Adrenal gland (tissue), 19 donors: ENCODE measurements at regions of chr11 and their contacts with region 1.

Region 1: GRCh38 chr11:130434521-130435223 is 6.3 kb upstream of the ADAMTS8 start:
- DNase-seq: peak; percentile 68 to 89 (median 78)
- H3K4me3 ChIP-seq: peak overlapping the region; percentile 48 to 71 (median 56)
- H3K27ac ChIP-seq: peak overlapping the region in 2 of 5 donors; percentile 37 to 43
- H3K4me1 ChIP-seq: peaks cover 0 to 5% of the 10 kb centered on the region in 2 donors
- H3K27me3 ChIP-seq: peaks cover 15% of the 10 kb centered on the region
- CTCF ChIP-seq: peak; percentile 71 to 89 (median 80)
- POLR2A ChIP-seq: no peak

Region 2: DNA sequence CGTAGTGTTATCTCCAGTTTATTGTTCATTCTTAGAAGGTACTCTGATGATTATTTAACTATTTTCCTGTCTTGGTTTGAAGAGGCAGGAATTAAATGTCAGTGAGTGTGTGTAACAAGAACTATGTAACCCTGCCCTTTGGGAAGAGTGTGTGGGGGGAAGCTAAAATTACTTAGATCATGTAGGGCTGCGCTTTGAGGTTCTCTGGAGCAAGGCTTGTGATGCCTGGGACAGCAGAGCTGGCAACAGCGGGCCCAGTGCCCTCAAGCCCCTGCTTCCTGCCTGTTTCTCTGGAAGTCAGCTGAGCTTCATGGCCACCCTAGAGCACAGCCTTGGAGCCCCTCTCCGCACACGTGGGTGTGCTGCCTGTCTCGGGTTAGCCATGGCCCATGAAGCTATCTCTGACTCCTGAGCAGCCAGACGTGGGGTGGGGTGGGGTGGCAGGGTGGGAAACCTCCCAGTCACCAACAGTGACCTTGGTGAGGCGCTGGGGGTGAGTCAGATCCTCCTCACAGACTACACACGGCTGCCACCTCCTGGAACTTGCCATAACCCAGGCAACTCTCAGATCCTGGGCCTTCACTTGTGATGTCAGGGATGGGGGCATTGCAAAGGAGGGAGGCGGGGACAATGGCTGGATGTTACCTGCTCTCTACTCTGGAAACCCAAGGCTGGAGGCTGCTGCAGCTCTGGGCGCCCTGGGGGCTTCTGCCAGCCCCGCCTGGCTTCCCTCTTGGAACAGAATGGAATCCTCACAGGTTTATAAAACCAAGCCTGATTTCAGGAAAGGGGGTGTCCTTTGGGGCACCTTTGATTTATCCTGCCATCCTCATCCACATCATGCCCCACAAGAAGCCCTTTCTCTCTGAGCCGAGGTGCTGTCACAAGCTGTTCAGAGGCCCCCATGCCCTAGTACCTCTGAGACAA is 393.0 kb after region 1 on chr11:
- intact Hi-C with region 1: loop called in 1 of 2 experiments (anchors 10 kb)
- DNase-seq: peak; percentile 54 to 90 (median 84)
- H3K4me3 ChIP-seq: no peak overlapping the region
- H3K27ac ChIP-seq: peak overlapping the region in 1 of 5 donors; percentile 35
- H3K4me1 ChIP-seq: no peaks in the 10 kb centered on the region
- H3K27me3 ChIP-seq: no peaks in the 10 kb centered on the region
- CTCF ChIP-seq: peak in 5 of 6 experiments; percentile 42 to 57 (median 51)
- POLR2A ChIP-seq: no peak

Region 3: DNA sequence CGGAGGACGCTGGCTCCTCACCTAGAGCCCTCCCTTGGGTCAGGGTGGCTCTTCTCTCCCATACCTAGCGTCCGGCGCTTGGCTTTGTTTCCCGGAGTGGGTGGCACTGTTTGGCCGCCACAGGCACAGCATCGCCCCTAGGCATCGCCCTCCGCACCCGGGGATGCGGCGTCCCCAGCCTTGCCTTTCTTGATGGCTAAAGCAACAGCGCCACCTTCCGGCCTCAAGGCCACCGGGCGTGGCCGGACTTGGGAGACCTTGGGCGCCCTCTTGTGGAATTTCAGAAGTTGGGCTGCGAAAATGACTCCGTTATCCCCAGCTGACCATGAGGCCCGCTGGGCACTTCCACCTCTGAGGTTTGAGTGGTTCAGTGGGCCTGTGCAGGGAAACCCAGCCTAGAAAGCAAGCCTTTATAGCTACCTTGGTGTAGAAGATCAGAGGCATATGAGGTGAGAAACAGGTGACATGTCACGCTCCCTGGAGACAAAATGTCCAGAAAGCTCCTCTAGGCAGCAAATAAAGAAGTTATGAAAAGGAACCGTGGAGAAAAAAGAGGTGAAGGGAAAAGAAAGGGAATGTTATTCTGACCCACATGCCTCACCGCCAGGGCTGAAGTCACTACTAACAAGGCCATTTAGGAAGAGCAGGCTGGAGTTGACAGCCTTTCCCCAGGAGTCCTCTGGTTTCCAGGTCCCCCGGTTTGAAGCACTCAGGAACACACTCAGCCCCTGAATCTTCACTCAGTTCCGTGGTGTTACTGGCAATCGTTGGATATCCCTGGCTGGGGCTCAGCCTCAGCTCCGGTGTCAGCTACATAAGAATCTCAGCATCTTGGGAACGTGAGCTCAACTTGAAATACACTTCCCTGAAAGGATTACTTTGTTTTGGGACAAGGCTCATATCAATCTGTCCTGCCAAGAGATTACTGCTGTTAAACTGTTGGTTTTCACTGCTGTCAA is 427.5 kb after region 1 on chr11:
- intact Hi-C with region 1: loop called (anchors 2 to 5 kb)
- DNase-seq: peak; percentile 87 to 97 (median 92)
- H3K4me3 ChIP-seq: no peak overlapping the region
- H3K27ac ChIP-seq: no peak overlapping the region
- H3K4me1 ChIP-seq: no peaks in the 10 kb centered on the region
- H3K27me3 ChIP-seq: no peaks in the 10 kb centered on the region
- CTCF ChIP-seq: peak; percentile 99 to 100 (median 100)
- POLR2A ChIP-seq: no peak